ENCODE measurements at regions of chr6 and their contacts with region 1.

Region 1: DNA sequence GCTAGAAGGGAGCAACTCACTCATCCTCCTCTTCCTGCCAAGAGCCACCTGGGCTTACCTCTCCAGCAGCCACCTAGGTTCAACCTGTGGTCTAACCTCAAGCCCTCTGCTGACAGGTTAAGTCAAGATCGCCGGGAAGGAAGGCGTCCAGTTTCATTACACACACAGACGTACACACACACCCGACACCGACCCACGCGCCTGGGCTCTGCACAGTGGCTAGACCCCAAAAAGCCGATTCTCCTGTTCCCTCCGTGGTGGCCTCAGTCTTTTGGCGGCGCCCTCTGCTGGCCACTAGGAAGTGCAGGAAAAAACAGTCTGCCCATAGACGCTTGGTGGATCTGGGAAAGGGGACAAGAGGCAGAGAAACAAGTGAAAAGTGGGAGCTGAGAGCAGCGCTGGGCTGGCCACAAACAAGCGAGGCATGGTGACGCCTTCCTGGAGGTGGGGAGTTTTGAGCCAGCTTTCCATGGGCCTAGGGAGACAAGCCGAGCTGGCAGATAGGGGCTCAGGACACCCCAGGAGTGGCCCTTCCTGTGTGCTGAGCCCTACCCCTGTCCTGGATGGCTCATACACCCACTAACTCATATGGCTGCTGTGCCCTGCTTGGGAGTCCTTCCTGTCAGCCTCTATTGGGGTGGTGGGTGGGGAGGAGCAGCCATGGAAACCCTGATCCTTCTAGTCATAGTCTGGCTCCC is 52.7 kb downstream of the MRPL14 start:
- DNase-seq: peak; percentile 85
- CTCF ChIP-seq: peak; percentile 97

Region 2: DNA sequence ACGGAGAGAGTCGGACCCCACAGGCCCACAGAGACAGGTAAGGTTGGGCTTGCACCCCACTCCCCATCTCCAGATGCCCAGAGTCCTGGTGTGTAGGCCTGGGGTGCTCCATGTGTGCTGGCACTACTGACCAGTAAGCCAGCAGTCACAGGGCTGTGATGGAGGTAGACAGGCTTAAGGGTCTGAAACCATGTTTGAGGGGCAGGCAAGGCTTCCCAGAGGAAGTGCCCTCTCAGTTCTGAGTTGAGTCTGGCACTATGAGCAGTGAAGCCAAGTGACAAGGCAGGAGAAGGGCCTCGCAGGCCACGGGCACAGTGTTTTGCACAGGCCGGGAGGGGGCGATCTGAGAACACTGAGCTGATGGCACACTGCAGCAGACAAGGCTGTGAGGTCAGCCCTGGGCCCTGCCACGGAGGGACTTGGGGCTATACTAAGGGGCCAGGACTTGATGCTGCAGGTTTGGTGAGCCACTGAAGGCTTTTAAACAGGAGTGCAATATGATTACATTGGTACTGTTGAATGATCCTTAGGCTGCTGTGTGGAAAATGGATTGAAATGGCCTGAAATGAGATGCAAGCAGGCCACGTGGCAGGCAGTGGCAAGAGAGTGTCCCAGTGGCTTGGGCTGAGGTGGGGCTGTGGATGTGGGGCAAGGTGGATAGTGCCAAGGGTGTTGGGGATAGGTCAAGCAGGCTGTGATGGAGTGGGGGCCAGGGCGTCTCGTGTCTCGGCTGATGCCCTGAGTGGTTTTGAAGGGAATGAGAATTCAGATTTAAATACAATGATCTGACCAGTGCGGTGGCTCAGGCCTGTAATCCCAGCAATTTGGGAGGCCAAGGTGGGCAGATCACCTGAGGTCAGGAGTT is 811.0 kb before region 1 on chr6:
- CTCF ChIA-PET with region 1: no interaction called
- POLR2A ChIA-PET with region 1: no interaction called
- DNase-seq: peak; percentile 93
- CTCF ChIP-seq: peak; percentile 94

Region 3: DNA sequence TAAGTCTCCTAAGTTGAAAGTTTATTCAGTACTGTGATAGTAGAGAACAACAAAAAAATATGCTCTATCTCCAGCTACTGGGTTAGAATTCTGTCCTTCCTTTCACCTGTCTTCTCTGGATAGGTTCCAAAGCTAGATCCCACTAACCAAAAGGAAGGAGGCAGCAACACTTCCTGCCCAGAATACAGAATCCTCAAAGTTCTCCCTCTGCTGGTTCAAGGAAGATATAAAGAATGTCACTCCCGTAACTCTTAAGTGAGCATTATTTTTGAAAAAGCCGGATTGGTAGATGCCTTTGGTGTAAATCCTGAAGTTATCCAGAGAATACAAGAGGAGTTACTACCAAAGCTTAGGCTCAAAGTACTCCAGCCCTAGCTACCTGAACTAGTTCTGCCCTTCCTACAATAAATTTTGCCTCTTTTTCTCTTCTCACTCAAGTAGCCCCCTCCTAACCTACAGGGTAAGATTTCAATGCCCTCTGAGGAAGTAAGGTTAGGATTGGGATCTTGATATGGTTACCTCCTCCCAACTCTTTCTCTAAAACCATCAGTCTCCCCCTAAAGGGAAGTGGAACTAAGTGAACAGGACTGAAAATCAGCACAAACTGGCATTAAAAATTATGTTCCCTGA is 740.0 kb before region 1 on chr6:
- CTCF ChIA-PET with region 1: no interaction called
- POLR2A ChIA-PET with region 1: no interaction called
- DNase-seq: no peak
- CTCF ChIP-seq: no peak

Region 4: DNA sequence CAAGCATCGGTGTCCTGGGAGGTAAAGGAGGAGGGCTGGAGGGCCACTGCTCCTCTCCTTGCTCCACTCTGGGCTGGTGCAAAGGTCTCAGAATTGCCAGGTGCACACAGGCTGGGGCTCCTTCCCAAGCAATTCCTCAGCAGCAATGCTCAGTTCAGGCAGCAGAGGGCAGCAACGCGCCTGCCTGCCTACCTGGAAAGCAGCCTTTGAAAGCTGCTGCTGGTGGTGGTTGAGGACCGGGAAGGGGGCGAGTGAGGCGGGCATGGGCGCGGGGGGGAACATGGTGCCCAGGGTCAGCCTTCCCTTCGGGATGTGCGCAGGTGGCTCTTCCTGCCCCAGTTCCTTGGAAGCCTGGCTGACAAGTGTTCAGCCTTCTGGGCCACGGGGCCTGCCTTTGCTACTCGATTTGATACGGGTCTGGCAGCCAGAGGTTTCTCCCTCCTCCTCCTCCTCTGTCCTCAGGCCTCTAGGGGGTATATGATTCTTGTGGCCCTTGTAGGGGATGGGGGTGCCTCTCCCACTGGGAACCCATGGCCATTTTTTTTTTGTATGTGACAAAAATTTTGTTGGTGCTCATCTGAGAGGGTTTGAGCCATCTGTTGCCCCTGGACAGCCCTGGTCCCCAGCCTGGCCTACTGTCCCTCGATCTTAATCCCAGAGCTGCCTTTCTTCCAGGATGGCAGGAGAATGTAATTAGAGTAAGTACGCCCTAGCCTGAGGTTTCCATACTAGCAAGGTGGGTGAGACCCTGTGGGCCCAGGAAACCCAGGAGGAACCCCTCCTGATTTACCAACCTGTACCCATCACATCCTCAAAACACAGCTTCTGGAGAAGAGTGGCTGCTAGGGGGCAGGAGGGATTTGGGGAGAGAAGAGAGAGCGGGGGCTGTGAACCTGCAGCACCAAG is 407.1 kb before region 1 on chr6:
- CTCF ChIA-PET with region 1: interaction called, 143 read pairs
- POLR2A ChIA-PET with region 1: no interaction called
- DNase-seq: peak; percentile 86
- CTCF ChIP-seq: peak; percentile 100

Region 5: GRCh38 chr6:43723737-43724295 is 350.8 kb before region 1 on chr6:
- CTCF ChIA-PET with region 1: interaction called, 36 read pairs
- POLR2A ChIA-PET with region 1: no interaction called
- DNase-seq: peak; percentile 82
- CTCF ChIP-seq: peak; percentile 65

Region 6: DNA sequence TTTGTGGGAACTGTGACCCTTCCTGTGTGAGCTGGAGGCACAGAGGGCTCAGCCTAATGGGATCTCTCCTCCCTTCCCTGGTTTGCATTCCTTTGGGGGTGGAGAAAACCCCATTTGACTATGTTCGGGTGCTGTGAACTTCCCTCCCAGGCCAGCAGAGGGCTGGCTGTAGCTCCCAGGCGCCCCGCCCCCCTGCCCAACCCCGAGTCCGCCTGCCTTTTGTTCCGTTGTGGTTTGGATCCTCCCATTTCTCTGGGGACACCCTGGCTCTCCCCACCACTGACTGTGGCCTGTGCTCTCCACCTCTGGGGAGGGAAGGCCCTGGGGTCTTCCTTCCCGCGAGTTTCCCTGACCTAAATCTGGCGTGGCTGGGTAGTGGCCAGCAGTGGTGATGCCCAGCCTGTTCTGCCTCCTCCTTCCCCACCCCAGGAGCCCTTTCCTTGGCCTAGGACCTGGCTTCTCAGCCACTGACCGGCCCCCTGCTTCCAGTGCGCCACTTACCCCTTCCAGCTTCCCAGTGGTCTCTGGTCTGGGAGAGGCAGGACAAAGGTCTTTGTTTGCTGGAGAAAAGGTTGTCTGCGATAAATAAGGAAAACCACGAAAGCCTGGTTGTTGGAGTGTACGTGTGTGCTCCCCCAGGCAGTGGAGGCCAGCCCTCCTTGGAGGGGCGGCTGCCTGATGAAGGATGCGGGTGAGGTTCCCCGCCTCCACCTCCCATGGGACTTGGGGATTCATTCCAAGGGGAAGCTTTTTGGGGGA is 299.6 kb before region 1 on chr6:
- CTCF ChIA-PET with region 1: interaction called, 174 read pairs
- POLR2A ChIA-PET with region 1: interaction called, 4 read pairs
- DNase-seq: peak; percentile 88
- CTCF ChIP-seq: peak; percentile 70

Region 7: DNA sequence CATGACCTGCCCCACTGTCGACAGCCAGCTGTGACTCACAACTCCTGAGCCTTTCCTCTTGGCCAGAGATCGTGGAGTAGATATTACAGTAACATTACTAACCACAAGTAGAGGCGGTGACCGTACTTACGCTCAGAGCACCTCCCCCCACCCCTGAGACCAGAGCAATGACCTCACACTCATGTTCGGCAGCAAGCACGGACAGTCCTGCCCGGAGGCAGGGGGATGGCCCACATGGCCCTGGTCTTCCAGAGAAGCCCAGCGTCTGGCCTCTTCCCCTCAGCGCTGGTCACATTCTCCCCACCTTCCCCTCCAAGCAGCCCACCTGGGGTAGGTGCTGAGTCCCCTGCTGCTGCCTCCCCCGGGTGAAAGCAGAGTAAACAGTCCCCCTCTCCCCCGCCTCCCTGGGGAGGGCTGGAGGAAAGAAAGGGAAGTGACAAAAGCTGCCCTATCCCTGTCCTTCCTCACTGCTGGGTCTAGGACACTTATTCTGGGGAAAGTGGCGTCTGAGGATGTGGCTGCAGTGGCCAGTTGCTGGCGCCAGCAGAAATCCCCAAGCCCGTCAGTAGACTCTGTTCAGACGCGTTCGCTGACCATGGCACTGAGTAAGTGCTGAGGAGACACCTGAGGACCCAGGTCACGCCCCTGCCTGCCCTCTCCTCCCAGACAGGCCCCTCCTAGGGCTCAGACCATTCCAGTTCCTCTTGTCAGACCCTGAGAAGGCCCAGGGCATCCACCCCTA is 15.8 kb before region 1 on chr6:
- CTCF ChIA-PET with region 1: interaction called, 57 read pairs
- POLR2A ChIA-PET with region 1: no interaction called
- DNase-seq: peak; percentile 79
- CTCF ChIP-seq: no peak

Region 8: DNA sequence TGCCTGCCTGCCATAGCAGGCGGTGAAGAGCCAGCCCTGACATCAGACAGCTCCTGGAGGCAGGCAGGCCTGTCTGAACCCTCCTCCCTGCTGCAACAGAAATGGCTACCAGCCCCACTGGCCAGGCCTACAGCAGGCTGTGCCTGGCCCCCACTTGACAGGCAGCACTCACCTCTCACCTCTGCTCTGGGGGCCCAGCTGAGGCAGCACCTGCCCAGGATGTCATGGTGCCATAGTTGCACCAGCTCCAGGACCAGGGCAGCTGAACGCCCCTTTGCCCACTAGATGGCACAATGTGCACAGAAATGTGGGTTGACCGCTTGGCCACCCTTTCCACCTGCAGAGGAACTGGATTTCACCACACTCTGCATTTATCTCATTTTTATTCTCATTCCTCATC is 22.0 kb after region 1 on chr6:
- CTCF ChIA-PET with region 1: interaction called, 95 read pairs
- POLR2A ChIA-PET with region 1: no interaction called
- DNase-seq: peak; percentile 86
- CTCF ChIP-seq: peak; percentile 87

Region 9: DNA sequence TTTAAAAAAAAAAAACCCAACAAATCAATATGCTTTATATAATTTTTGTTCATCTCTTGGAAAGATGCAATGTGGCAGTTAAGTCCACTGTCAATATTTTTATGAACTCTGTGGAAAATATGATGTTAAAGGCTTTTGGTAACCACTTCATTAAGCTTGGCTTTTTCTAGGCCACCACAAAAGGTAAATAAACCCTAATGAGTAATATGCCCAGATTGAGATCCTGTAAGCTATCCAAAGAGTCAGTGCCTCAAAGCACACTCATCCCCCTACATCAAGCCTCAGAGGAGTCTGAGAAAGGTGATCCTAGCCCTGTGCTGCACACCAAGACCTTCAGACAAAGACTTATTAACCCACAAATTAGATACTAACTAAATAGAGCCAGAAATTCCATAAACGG is 434.1 kb after region 1 on chr6:
- CTCF ChIA-PET with region 1: no interaction called
- POLR2A ChIA-PET with region 1: no interaction called
- DNase-seq: no peak
- CTCF ChIP-seq: no peak